Posterior cingulate gyrus (tissue), 11 donors: ENCODE measurements at regions of chr16 and their contacts with region 1.

Region 1: GRCh38 chr16:67480833-67481560 is at the start of gene ATP6V0D1:
- DNase-seq: peak; percentile 95 to 99 (median 98)

Region 2: GRCh38 chr16:67246934-67247697 is 233.9 kb before region 1 on chr16 and contains the start of gene FHOD1:
- intact Hi-C with region 1: no loop called
- DNase-seq: peak; percentile 89 to 99 (median 96)

Region 3: GRCh38 chr16:67521095-67521804 is 40.3 kb after region 1 on chr16:
- intact Hi-C with region 1: loop called (anchors 5 kb)
- DNase-seq: peak; percentile 86 to 99 (median 96)